ENCODE measurements at regions of chr17 and their contacts with region 1.

Region 1: DNA sequence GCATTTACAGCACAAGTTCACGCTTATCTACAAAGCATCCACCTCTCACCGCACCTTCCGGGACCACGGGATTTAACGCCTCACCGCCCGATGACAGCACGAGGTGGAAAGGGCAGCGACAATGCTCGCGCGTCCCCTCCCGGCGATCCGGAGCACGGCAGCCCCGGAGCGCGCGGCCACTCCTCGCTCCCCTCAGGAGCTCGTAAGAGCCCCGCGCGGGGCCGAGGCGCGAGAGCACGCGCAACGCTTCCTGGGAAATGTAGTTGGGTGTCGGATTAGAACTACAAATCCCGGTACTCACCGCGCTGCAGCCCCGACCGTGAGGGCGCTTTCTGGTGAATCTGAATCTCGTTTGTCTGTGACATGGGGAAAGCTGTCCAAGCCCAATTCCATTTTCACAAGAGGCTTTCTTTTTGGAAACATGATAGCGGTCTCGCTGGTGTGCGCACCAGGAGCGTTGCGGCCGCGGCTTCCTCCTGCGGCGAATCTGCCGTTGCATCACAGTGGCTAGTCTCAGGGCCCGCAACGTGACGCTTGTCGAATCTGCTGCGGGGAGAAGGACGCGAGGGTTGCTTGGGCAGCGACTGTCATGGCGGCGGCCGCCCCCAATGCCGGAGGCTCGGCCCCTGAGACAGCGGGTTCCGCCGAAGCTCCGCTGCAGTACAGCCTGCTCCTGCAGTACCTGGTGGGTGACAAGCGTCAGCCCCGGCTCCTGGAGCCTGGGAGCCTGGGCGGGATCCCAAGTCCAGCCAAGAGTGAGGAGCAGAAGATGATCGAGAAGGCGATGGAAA is at the start of gene TIMM22:
- DNase-seq: peak; percentile 85 to 95 (median 89)
- ATAC-seq: peak; percentile 99
- H3K4me3 ChIP-seq: peak within 1 kb of the TSS; percentile 99
- H3K27ac ChIP-seq: peak within 1 kb of the TSS; percentile 96
- H3K4me1 ChIP-seq: peaks cover 6% of the 10 kb centered on the region in 2 experiments; a peak in 3 of 5 replicates
- H3K27me3 ChIP-seq: no peaks in the 10 kb centered on the region
- CTCF ChIP-seq: peak; percentile 87 to 90 (median 87)
- EP300 ChIP-seq: peak; percentile 100
- POLR2A ChIP-seq: peak; percentile 90
- RAD21 ChIP-seq: peak; percentile 84 to 85
- polyA plus RNA-seq, gene TIMM22: 5.9 to 6.1 TPM

Region 2: DNA sequence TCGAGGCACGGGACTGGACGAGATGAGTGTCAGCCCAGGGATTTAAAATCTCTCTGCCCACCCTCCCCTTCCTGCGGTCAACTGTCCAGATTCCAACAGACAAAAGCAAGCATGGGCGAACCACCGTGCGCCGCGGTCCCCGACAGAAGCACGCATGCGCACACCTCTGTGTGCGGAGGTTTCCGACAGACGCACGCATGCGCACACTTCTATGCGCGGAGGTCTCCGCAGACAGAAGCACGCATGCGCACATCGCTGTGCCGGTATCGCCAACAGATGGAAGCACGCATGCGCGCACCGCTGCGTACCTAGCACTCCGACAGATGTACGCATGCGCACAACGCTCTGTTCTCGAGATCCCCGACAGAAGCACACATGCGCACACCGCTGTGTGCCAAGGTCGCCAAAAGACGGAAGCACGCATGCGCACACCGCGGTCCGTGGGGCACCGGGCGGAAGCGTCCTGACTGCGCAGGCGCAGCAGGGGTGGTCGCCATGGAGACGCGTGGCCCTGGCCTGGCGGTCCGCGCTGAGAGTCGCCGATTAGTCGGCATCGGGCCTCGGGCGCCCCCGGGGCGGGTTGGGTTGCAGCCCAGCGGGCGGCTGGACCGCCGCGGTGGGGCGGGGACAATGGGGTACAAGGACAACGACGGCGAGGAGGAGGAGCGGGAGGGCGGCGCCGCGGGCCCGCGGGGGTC is 586.8 kb before region 1 on chr17:
- CTCF ChIA-PET with region 1: interaction called, 3 read pairs
- POLR2A ChIA-PET with region 1: no interaction called
- in situ Hi-C with region 1: no loop called
- intact Hi-C with region 1: loop called (anchors 5 kb)
- DNase-seq: peak; percentile 97 to 98 (median 98)
- ATAC-seq: peak; percentile 92
- H3K4me3 ChIP-seq: peak overlapping the region; percentile 56
- H3K27ac ChIP-seq: no peak overlapping the region
- H3K4me1 ChIP-seq: peaks cover 7 to 17% of the 10 kb centered on the region in 2 experiments; a peak in 4 of 5 replicates
- H3K27me3 ChIP-seq: peaks cover 0 to 8% of the 10 kb centered on the region in 2 experiments; a peak in 1 of 5 replicates
- CTCF ChIP-seq: no peak
- EP300 ChIP-seq: no peak
- POLR2A ChIP-seq: peak; percentile 51
- RAD21 ChIP-seq: no peak

Region 3: GRCh38 chr17:794876-795275 is 201.9 kb before region 1 on chr17:
- CTCF ChIA-PET with region 1: interaction called, 11 read pairs
- POLR2A ChIA-PET with region 1: interaction called, 3 read pairs
- in situ Hi-C with region 1: no loop called
- intact Hi-C with region 1: loop called (anchors 5 kb)
- DNase-seq: peak; percentile 54 to 65 (median 61)
- ATAC-seq: peak; percentile 93
- H3K4me3 ChIP-seq: no peak overlapping the region
- H3K27ac ChIP-seq: no peak overlapping the region
- H3K4me1 ChIP-seq: peaks cover 0 to 3% of the 10 kb centered on the region in 2 experiments; a peak in 1 of 5 replicates
- H3K27me3 ChIP-seq: peaks cover 6 to 20% of the 10 kb centered on the region in 2 experiments; a peak in 4 of 5 replicates
- CTCF ChIP-seq: peak; percentile 76 to 81 (median 77)
- EP300 ChIP-seq: no peak
- POLR2A ChIP-seq: no peak
- RAD21 ChIP-seq: peak; percentile 68 to 85

Region 4: DNA sequence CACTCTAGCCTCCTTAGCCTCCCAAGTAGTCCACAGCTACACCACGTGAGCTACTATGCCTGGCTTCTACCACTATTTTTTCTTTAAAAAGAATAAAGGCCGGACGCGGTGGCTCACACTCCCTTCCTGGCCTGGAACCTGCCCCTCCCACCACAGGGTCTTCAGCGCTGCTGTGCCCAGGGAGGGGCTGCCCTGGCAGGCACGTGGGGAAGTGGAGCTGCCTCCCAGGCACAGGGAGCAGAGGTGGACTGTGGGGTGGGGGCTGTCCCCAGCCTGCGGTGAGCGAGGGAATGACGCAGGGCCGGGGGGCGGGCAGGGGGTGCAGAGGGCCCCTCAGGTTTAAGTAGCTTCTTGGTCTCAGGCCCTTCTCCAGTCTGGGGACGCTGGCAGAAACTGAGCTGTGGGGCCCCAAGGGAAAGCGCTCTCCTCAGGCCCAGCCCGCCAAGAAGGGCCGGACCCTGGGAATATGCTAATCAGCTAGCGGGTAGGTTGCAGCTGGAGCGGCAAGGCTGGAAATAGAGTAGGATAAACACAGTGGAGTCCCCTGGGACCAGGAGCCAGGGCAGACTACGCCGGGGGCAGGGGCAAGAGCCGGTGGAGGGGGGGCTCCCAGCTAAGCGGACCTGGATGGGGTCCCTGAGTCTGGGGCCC is 47.0 kb after region 1 on chr17:
- CTCF ChIA-PET with region 1: no interaction called
- POLR2A ChIA-PET with region 1: no interaction called
- in situ Hi-C with region 1: no loop called
- intact Hi-C with region 1: no loop called
- DNase-seq: no peak
- ATAC-seq: no peak
- H3K4me3 ChIP-seq: no peak overlapping the region
- H3K27ac ChIP-seq: no peak overlapping the region
- H3K4me1 ChIP-seq: peaks cover 0 to 16% of the 10 kb centered on the region in 2 experiments; a peak in 2 of 5 replicates
- H3K27me3 ChIP-seq: peaks cover 28 to 77% of the 10 kb centered on the region in 2 experiments; a peak in 4 of 5 replicates
- CTCF ChIP-seq: no peak
- EP300 ChIP-seq: no peak
- POLR2A ChIP-seq: no peak
- RAD21 ChIP-seq: no peak